Sigmoid colon (tissue), 7 donors: ENCODE measurements at regions of chr11 and their contacts with region 1.

Region 1: DNA sequence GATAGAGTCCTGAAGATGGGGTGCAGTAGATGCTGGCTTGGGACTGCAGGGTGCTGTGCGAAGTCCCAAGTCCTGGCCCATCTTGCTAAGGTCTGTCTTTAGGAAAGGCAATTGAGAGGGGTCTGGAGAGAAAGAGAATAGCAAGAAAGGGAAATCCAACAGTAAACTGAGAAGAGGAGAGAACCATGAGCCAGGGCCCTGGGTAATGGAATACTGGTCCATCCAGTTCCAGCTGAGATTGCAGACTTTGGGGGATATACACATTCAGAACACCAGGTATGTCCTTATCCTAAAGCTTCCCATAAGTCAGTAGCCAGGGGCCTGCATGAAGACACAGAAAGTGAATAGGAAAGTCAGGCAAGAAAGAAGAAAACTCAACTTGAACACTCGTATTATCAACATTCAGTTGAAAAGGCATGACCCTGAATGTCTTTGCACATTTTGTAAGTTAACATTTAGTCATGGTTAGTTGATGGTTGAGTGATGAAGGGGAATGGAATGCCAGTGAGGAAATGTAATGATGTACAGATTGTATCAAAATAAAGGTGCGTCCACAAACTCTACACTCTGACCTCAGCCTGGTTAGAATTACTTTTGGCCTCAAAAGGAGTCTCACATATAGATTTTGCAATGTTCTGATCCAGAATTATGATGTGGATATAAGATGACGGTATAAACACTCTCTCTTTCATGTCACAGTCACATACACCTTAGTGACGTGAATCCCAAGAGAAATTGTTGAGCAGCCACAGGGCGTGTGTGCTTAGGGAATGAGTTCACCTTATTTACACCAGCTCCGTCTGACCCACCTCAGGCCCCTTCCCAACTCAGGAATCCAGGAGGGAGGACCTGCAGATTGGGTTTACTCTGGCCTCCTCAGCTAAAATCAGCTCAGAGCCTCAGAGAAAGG is 100.3 kb downstream of the RDX start:
- DNase-seq: no peak
- H3K4me3 ChIP-seq: no peak overlapping the region
- H3K27ac ChIP-seq: no peak overlapping the region
- H3K4me1 ChIP-seq: no peaks in the 10 kb centered on the region
- H3K27me3 ChIP-seq: no peaks in the 10 kb centered on the region
- CTCF ChIP-seq: no peak
- EP300 ChIP-seq: no peak
- POLR2A ChIP-seq: no peak

Region 2: GRCh38 chr11:109946322-109946846 is 249.7 kb before region 1 on chr11:
- intact Hi-C with region 1: loop called (anchors 10 kb)
- DNase-seq: peak; percentile 89
- H3K4me3 ChIP-seq: peak overlapping the region in 3 of 4 donors; percentile 20 to 38 (median 38)
- H3K27ac ChIP-seq: peak overlapping the region; percentile 54 to 62 (median 58)
- H3K4me1 ChIP-seq: peaks cover 0 to 5% (median 2%) of the 10 kb centered on the region in 4 donors
- H3K27me3 ChIP-seq: no peaks in the 10 kb centered on the region
- CTCF ChIP-seq: peak; percentile 74 to 89 (median 85)
- EP300 ChIP-seq: no peak
- POLR2A ChIP-seq: no peak

Region 3: DNA sequence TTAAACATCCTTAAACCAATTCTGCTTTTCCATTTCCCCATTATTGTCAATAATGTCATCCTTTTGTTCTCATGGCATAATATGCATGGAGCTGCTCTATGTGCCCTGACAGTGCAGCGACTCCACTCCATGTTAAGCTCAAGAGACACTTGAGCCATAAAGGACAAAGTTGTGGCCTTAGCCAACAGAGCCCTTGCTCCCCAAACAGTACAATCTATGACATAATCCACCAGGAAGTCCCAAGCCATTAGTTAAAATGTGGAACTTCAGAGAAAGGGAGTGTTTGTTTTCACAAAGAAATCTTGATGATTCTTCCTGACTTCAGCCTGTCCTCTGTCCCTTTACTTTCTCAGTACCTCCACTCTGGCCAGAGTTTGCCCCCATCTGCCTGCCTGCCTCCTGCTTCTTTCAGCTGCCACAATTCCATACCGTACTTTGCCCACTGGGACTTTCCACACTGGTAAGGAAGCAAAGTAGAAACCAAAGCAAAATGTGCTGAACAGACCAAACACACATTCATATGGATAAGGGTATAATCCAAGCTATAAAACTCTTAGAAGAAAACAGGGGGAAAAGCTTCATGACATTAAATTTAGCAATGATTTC is 149.2 kb before region 1 on chr11:
- intact Hi-C with region 1: no loop called
- DNase-seq: no peak
- H3K4me3 ChIP-seq: no peak overlapping the region
- H3K27ac ChIP-seq: no peak overlapping the region
- H3K4me1 ChIP-seq: no peaks in the 10 kb centered on the region
- H3K27me3 ChIP-seq: no peaks in the 10 kb centered on the region
- CTCF ChIP-seq: no peak
- EP300 ChIP-seq: no peak
- POLR2A ChIP-seq: no peak

Region 4: GRCh38 chr11:110286298-110287040 is 90.4 kb after region 1 on chr11:
- intact Hi-C with region 1: no loop called
- DNase-seq: no peak
- H3K4me3 ChIP-seq: no peak overlapping the region
- H3K27ac ChIP-seq: no peak overlapping the region
- H3K4me1 ChIP-seq: peaks cover 0 to 23% (median 7%) of the 10 kb centered on the region in 4 donors
- H3K27me3 ChIP-seq: no peaks in the 10 kb centered on the region
- CTCF ChIP-seq: no peak
- EP300 ChIP-seq: no peak
- POLR2A ChIP-seq: no peak

Region 5: GRCh38 chr11:110366291-110366690 is 170.2 kb after region 1 on chr11:
- intact Hi-C with region 1: loop called (anchors 2 kb)
- DNase-seq: no peak
- H3K4me3 ChIP-seq: no peak overlapping the region
- H3K27ac ChIP-seq: peak overlapping the region in 2 of 4 donors; percentile 34 to 39
- H3K4me1 ChIP-seq: no peaks in the 10 kb centered on the region
- H3K27me3 ChIP-seq: no peaks in the 10 kb centered on the region
- CTCF ChIP-seq: no peak
- EP300 ChIP-seq: no peak
- POLR2A ChIP-seq: no peak

Region 6: GRCh38 chr11:110376711-110377324 is 180.7 kb after region 1 on chr11:
- intact Hi-C with region 1: loop called (anchors 2 kb)
- DNase-seq: peak; percentile 87
- H3K4me3 ChIP-seq: peak overlapping the region in 2 of 4 donors; percentile 14 to 30
- H3K27ac ChIP-seq: peak overlapping the region; percentile 21 to 63 (median 49)
- H3K4me1 ChIP-seq: peaks cover 0 to 12% (median 5%) of the 10 kb centered on the region in 4 donors
- H3K27me3 ChIP-seq: no peaks in the 10 kb centered on the region
- CTCF ChIP-seq: peak; percentile 52 to 76 (median 60)
- EP300 ChIP-seq: no peak
- POLR2A ChIP-seq: no peak

Region 7: GRCh38 chr11:110409174-110409573 is 213.1 kb after region 1 on chr11:
- intact Hi-C with region 1: no loop called
- DNase-seq: no peak
- H3K4me3 ChIP-seq: no peak overlapping the region
- H3K27ac ChIP-seq: no peak overlapping the region
- H3K4me1 ChIP-seq: no peaks in the 10 kb centered on the region
- H3K27me3 ChIP-seq: no peaks in the 10 kb centered on the region
- CTCF ChIP-seq: no peak
- EP300 ChIP-seq: no peak
- POLR2A ChIP-seq: no peak

Region 8: GRCh38 chr11:110429731-110430266 is 233.7 kb after region 1 on chr11 and contains the start of gene FDX1:
- intact Hi-C with region 1: loop called (anchors 1 kb)
- DNase-seq: peak; percentile 87
- H3K4me3 ChIP-seq: peak within 1 kb of the TSS; percentile 55 to 80 (median 74)
- H3K27ac ChIP-seq: peak within 1 kb of the TSS; percentile 90 to 93 (median 92)
- H3K4me1 ChIP-seq: peaks cover 0 to 36% (median 26%) of the 10 kb centered on the region in 4 donors
- H3K27me3 ChIP-seq: no peaks in the 10 kb centered on the region
- CTCF ChIP-seq: peak in 2 of 4 experiments; percentile 34 to 71
- EP300 ChIP-seq: no peak
- POLR2A ChIP-seq: no peak
- total RNA-seq, gene FDX1: 12.5 to 13.8 (median 13.5) TPM